ENCODE measurements at regions of chr4 and their contacts with region 1.

Region 1: GRCh38 chr4:77618383-77619122 is 12.9 kb downstream of the CXCL13 start:
- DNase-seq: peak; percentile 79
- ATAC-seq: peak; percentile 93
- H3K4me3 Mint-ChIP-seq: no peak overlapping the region
- H3K27ac Mint-ChIP-seq: no peak overlapping the region
- H3K4me1 Mint-ChIP-seq: peaks cover 6% of the 10 kb centered on the region
- H3K27me3 Mint-ChIP-seq: peaks cover 15% of the 10 kb centered on the region
- CTCF ChIP-seq: peak; percentile 85

Region 2: GRCh38 chr4:77465271-77465670 is 153.3 kb before region 1 on chr4:
- CTCF ChIA-PET with region 1: interaction called, 61 read pairs
- POLR2A ChIA-PET with region 1: interaction called, 3 read pairs
- intact Hi-C with region 1: no loop called
- DNase-seq: peak; percentile 52
- ATAC-seq: peak; percentile 49
- H3K4me3 Mint-ChIP-seq: no peak overlapping the region
- H3K27ac Mint-ChIP-seq: no peak overlapping the region
- H3K4me1 Mint-ChIP-seq: no peaks in the 10 kb centered on the region
- H3K27me3 Mint-ChIP-seq: peaks cover 6% of the 10 kb centered on the region
- CTCF ChIP-seq: peak; percentile 52

Region 3: GRCh38 chr4:77629885-77630284 is 11.3 kb after region 1 on chr4:
- CTCF ChIA-PET with region 1: interaction called, 30 read pairs
- POLR2A ChIA-PET with region 1: interaction called, 3 read pairs
- intact Hi-C with region 1: no loop called
- DNase-seq: peak; percentile 29
- ATAC-seq: peak; percentile 84
- H3K4me3 Mint-ChIP-seq: no peak overlapping the region
- H3K27ac Mint-ChIP-seq: peak overlapping the region; percentile 1
- H3K4me1 Mint-ChIP-seq: peaks cover 14% of the 10 kb centered on the region
- H3K27me3 Mint-ChIP-seq: no peaks in the 10 kb centered on the region
- CTCF ChIP-seq: no peak

Region 4: GRCh38 chr4:77877190-77877589 is 258.6 kb after region 1 on chr4:
- CTCF ChIA-PET with region 1: no interaction called
- POLR2A ChIA-PET with region 1: no interaction called
- intact Hi-C with region 1: no loop called
- DNase-seq: no peak
- ATAC-seq: no peak
- H3K4me3 Mint-ChIP-seq: no peak overlapping the region
- H3K27ac Mint-ChIP-seq: no peak overlapping the region
- H3K4me1 Mint-ChIP-seq: peaks cover 34% of the 10 kb centered on the region
- H3K27me3 Mint-ChIP-seq: no peaks in the 10 kb centered on the region
- CTCF ChIP-seq: no peak

Region 5: GRCh38 chr4:78237360-78237759 is 618.8 kb after region 1 on chr4:
- CTCF ChIA-PET with region 1: no interaction called
- POLR2A ChIA-PET with region 1: no interaction called
- intact Hi-C with region 1: no loop called
- DNase-seq: no peak
- ATAC-seq: no peak
- H3K4me3 Mint-ChIP-seq: no peak overlapping the region
- H3K27ac Mint-ChIP-seq: no peak overlapping the region
- H3K4me1 Mint-ChIP-seq: no peaks in the 10 kb centered on the region
- H3K27me3 Mint-ChIP-seq: no peaks in the 10 kb centered on the region
- CTCF ChIP-seq: no peak

Measured in activated CD8-positive, alpha-beta T cell treated with anti-CD3 and anti-CD28 coated beads for 36 hours (primary cell).